Left colon (tissue), 2 donors: ENCODE measurements at regions of chr19 and their contacts with region 1.

Region 1: GRCh38 chr19:46614114-46614722 is 10.7 kb downstream of the PTGIR start:
- DNase-seq: peak; percentile 76 to 90
- ATAC-seq: peak; percentile 74

Region 2: GRCh38 chr19:46551164-46551563 is 63.1 kb before region 1 on chr19:
- intact Hi-C with region 1: no loop called
- DNase-seq: no peak
- ATAC-seq: no peak

Region 3: GRCh38 chr19:46661020-46661731 is 47.0 kb after region 1 on chr19 and contains the start of gene DACT3:
- intact Hi-C with region 1: loop called (anchors 5 to 10 kb)
- DNase-seq: peak; percentile 100
- ATAC-seq: peak; percentile 92
- total RNA-seq, gene DACT3: 1.1 to 7.8 TPM